ENCODE measurements at regions of chr14 and their contacts with region 1.

Region 1: DNA sequence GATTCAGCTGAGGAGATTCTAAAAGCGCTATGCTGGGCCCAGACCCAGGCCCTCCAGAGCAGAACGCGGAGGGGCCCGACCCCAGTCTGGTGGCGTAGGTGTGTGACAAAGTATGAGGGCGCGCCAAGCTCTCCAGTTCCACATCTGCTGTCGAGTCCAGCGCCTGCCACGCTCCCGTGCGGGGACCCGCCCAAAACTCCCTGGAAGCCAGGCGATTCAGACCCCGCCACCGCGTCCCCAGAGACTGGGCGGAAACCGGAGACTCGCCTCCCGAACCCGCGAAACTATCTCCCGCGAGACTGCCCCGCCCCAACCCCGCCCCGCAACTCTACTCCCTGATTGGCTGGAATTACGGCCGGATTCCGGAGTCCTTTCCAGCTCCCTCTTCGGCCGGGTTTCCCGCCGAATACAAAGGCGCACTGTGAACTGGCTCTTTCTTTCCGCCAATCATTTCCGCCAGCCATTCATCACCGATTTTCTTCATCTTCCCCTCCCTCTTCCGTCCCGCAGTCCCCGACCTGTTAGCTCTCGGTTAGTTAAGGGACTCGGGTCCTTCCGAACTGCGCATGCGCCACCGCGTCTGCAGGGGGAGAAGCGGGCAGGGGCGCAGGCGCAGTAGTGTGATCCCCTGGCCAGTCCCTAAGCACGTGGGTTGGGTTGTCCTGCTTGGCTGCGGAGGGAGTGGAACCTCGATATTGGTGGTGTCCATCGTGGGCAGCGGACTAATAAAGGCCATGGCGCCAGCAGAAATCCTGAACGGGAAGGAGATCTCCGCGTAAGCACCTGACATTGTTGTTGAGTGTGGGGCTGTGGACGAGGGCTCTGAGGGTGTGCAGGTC is at the start of gene MTHFD1:
- DNase-seq: peak; percentile 98

Region 2: DNA sequence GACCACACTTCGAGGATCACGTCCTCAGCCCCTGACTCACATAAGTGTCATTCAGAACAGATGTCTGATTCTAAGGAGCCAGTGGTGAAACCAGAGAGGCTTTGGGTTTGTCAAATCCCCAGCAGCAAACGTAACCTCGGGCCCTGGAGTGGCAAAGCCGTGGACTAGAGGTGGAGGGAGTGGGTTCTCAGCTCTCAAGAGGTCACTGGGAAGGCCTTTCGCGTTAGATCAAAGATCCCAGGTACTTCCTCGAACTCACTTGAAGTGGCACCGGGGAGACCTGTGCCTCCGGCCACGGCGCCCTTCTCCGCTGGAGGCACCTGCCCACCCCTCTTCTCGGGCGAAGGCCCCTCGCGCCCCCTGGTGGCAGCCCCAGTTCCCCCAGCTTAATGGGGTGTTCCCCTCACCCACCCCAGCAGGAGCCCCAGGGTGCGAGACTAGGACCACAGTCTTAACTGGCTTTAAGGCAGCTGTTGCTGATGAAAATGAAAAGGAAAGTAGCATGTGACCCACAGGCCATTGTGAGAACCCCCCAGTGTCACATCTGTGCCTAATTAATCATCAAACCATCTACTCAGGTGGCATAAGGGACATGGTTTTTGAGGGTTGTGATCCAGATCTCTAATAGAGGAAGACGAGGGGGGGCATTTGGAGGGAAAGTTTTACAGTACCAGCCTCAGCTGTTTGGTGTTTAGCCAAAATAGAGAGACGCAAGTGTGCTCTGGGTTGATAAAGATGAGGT is 93.1 kb before region 1 on chr14:
- CTCF ChIA-PET with region 1: no interaction called
- POLR2A ChIA-PET with region 1: no interaction called
- DNase-seq: peak; percentile 81

Region 3: DNA sequence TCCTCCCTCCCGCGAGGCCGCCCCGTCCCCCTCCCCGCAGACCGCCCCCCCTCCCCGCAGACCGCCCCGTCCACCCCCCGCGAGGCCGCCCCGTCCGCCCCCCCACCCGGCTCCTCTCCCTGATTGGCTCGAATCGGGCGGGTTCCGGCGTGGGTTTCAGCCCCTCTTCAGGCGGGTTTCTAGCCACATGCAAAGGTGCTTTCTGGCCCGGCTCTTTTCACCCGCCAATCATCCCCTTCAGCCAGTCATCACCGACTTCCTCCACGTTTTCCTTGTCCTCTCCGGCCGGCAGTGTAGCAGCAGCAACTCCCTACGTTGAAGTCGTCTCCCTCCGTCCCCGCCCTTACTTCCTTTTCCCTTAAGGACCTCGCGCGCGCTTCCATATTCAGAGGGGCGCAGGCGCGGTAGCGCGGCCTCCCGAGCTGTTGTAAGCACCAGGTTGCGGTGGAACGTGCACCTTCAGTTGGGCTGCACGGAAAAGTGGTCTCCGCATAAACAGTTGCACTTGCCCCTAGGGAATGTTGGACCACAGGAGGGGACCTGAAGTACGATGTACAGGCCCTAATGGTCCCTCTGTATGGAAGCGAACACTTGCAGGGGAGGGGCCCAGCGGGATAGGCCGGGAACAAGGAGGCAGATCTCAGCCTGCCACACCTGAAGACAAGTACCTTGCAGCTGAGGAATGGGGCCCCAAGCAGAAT is 49.1 kb before region 1 on chr14:
- CTCF ChIA-PET with region 1: interaction called, 3 read pairs
- POLR2A ChIA-PET with region 1: interaction called, 45 read pairs
- DNase-seq: peak; percentile 95

Region 4: GRCh38 chr14:64345513-64345912 is 42.4 kb before region 1 on chr14:
- CTCF ChIA-PET with region 1: no interaction called
- POLR2A ChIA-PET with region 1: interaction called, 11 read pairs
- DNase-seq: no peak

Region 5: DNA sequence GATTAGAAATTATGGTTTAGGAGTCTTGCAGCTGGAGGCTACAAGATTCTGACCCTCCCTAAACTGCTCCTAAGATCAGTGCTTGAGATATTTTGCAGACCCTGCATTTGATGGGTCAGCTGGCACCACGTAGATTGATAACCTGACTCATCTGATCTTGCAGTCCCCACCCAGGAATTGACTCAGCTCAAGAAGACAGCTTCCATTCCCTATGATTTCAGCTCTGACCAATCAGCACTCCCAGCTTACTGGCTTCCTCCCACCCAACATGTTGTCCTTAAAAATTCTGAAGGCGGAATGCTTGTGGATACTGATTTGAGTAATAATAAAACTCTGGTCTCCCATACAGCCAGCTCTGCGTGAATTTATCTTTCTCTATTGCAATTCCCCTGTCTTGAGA is 23.0 kb before region 1 on chr14:
- CTCF ChIA-PET with region 1: no interaction called
- POLR2A ChIA-PET with region 1: interaction called, 14 read pairs
- DNase-seq: no peak

Region 6: DNA sequence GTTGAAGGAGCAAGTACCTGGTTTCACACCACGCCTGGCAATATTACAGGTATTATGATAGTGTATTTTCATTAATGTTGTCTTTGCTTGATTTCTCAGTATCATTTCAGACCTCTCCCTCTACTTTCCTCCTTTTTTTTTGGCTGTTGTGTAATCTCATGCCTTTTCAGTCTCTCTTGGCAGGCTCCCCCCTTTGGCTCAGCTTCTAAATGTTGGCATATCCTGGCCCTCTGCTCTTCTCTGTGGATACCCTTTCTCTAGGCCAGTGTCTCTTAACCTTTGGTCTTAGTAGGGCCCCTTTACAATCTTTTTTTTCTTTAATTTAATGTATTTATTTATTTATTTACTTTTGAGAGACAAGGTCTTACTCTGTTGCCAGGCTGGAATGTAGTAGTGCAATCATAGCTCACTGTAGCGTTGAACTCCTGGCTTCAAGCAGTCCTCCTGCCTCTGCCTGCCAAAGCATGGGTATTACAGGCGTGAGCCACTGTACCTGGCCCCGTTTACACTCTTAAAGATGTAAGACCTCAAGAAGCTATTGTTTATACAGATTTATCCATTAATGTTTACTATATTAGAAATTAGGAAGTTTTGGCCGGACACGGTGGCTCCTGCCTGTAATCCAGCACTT is 13.0 kb after region 1 on chr14:
- CTCF ChIA-PET with region 1: no interaction called
- POLR2A ChIA-PET with region 1: interaction called, 11 read pairs
- DNase-seq: no peak

Region 7: GRCh38 chr14:64628940-64629408 is 241.1 kb after region 1 on chr14:
- CTCF ChIA-PET with region 1: no interaction called
- POLR2A ChIA-PET with region 1: no interaction called
- DNase-seq: no peak

Measured in HEK293T (cell line).